SK-N-SH (cell line): ENCODE measurements at regions of chr10 and their contacts with region 1.

Region 1: GRCh38 chr10:60964257-60965235 is 20.6 kb upstream of the RHOBTB1 start:
- DNase-seq: peak; percentile 41
- H3K4me3 ChIP-seq: peak overlapping the region in 1 of 2 experiments; percentile 23; a peak in 1 of 4 replicates
- H3K27ac ChIP-seq: peak overlapping the region; percentile 74 to 92; a peak in 3 of 4 replicates
- H3K4me1 ChIP-seq: peaks cover 16 to 19% of the 10 kb centered on the region in 2 experiments
- H3K27me3 ChIP-seq: no peaks in the 10 kb centered on the region
- CTCF ChIP-seq: peak; percentile 91
- EP300 ChIP-seq: peak; percentile 60 to 70; a peak in 3 of 4 replicates
- RAD21 ChIP-seq: peak; percentile 97

Region 2: DNA sequence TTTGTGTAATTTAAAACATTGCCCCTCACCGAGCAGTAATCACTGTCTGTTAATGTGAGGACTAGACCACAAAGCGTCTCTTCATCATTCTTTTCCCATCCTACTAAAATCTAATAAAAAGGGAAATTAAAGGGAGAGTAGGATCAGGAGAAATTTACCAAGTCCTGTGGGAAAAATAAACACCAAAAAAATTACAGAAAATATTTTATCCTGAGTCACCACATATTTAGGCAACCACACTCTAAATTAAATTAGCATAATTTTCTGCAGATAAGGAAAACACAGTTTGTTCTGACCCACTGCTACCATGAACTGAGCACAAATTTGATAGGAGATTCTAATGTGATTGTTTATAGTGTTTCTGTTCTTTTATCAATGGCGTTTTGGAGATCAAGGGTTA is 1107.5 kb before region 1 on chr10:
- CTCF ChIA-PET with region 1: no interaction called
- POLR2A ChIA-PET with region 1: no interaction called
- DNase-seq: no peak
- H3K4me3 ChIP-seq: no peak overlapping the region
- H3K27ac ChIP-seq: peak overlapping the region in 1 of 2 experiments; percentile 41; a peak in 1 of 4 replicates
- H3K4me1 ChIP-seq: peaks cover 18 to 31% of the 10 kb centered on the region in 2 experiments
- H3K27me3 ChIP-seq: no peaks in the 10 kb centered on the region
- CTCF ChIP-seq: no peak
- EP300 ChIP-seq: no peak
- RAD21 ChIP-seq: no peak

Region 3: GRCh38 chr10:60816628-60817397 is 147.7 kb before region 1 on chr10:
- CTCF ChIA-PET with region 1: interaction called, 25 read pairs
- POLR2A ChIA-PET with region 1: no interaction called
- DNase-seq: peak; percentile 68
- H3K4me3 ChIP-seq: no peak overlapping the region
- H3K27ac ChIP-seq: peak overlapping the region; percentile 39 to 88; a peak in 3 of 4 replicates
- H3K4me1 ChIP-seq: peaks cover 2 to 32% of the 10 kb centered on the region in 2 experiments
- H3K27me3 ChIP-seq: no peaks in the 10 kb centered on the region
- CTCF ChIP-seq: peak; percentile 89
- EP300 ChIP-seq: peak in 1 of 2 experiments; percentile 35; a peak in 1 of 4 replicates
- RAD21 ChIP-seq: peak; percentile 96

Region 4: DNA sequence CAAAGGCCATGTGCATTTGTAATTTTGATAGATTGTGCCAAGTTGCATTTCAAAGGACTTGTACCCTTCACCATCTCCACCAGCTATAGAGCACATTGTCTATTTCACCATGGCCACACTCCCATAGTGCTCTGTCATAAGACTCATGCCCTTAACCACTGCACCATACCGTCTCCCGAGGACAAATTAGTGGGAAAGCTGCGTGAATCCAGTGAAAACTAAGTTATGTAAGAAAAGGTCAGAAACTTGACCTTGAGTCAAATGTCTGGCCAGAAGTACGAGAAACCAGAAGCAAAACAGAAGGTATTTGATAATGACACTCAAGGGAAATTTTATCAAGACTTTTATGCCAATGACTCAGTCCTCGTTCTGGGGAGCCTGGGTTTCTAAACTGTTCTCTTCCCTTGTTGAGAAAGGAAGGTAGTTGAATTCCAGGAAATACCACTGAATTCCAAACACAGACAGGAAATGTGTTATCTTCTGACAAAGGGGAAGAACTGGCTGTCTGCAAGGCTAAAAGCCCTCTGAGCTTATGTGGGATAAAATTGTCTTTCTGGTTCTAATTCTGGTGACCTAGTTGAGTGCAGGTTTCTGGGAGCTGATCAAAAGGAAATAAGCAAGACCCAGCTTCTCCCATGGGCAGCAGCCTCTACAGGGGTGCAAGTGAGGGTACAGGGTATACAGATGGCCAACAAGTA is 136.6 kb before region 1 on chr10:
- CTCF ChIA-PET with region 1: interaction called, 10 read pairs
- POLR2A ChIA-PET with region 1: no interaction called
- DNase-seq: no peak
- H3K4me3 ChIP-seq: peak overlapping the region in 1 of 2 experiments; percentile 42; a peak in 2 of 4 replicates
- H3K27ac ChIP-seq: peak overlapping the region; percentile 80 to 91
- H3K4me1 ChIP-seq: peaks cover 2 to 16% of the 10 kb centered on the region in 2 experiments; a peak in 2 of 4 replicates
- H3K27me3 ChIP-seq: no peaks in the 10 kb centered on the region
- CTCF ChIP-seq: no peak
- EP300 ChIP-seq: peak; percentile 19 to 73; a peak in 3 of 4 replicates
- RAD21 ChIP-seq: no peak

Region 5: GRCh38 chr10:60986791-60987190 is 22.2 kb after region 1 on chr10:
- CTCF ChIA-PET with region 1: no interaction called
- POLR2A ChIA-PET with region 1: no interaction called
- DNase-seq: no peak
- H3K4me3 ChIP-seq: no peak overlapping the region
- H3K27ac ChIP-seq: no peak overlapping the region
- H3K4me1 ChIP-seq: no peaks in the 10 kb centered on the region; a peak in 1 of 4 replicates
- H3K27me3 ChIP-seq: no peaks in the 10 kb centered on the region
- CTCF ChIP-seq: no peak
- EP300 ChIP-seq: no peak
- RAD21 ChIP-seq: no peak

Region 6: GRCh38 chr10:61091531-61091930 is 127.0 kb after region 1 on chr10:
- CTCF ChIA-PET with region 1: no interaction called
- POLR2A ChIA-PET with region 1: no interaction called
- DNase-seq: no peak
- H3K4me3 ChIP-seq: no peak overlapping the region
- H3K27ac ChIP-seq: no peak overlapping the region
- H3K4me1 ChIP-seq: no peaks in the 10 kb centered on the region
- H3K27me3 ChIP-seq: no peaks in the 10 kb centered on the region; the same call in 1 of the 2 replicates
- CTCF ChIP-seq: no peak
- EP300 ChIP-seq: no peak
- RAD21 ChIP-seq: no peak